CD8-positive, alpha-beta T cell (primary cell): ENCODE measurements at regions of chr17 and their contacts with region 1.

Region 1: DNA sequence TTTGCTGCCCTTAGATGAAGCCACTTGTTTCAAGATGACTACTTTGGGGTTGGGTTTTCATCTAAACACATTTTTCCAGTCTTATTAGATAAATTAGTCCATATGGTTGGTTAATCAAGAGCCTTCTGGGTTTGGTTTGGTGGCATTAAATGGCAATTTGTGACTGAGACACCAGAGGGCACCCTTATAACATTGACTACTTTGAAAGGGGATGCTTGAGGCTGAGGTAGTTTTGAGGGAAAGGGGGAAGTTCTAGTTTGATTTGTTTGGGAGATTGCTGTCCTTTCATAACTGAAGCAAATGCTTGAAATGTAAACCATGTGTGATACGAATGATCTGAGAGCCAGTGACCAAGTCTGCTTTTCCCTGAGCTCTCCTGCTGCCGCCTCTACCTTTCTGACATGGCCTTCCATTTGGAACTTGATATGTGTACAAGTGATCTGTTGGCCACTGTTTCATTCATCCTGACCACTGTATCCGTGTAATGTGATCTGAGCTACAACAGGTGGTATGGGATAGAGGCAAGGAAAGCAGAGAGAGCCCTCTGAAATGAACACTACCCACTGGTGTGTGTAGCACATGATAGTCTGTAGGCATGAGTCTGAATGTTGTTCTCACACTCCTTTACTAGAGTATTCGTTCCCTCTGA is 5.8 kb upstream of the RARA start:
- DNase-seq: peak in 5 of 9 experiments; percentile 41 to 83 (median 66)
- ATAC-seq: peak; percentile 69
- H3K4me3 ChIP-seq: no peak overlapping the region
- H3K4me3 Mint-ChIP-seq: no peak overlapping the region
- H3K27ac ChIP-seq: no peak overlapping the region
- H3K27ac Mint-ChIP-seq: no peak overlapping the region
- H3K4me1 ChIP-seq: peaks cover 35% of the 10 kb centered on the region
- H3K4me1 Mint-ChIP-seq: peaks cover 12% of the 10 kb centered on the region
- H3K27me3 ChIP-seq: no peaks in the 10 kb centered on the region
- H3K27me3 Mint-ChIP-seq: no peaks in the 10 kb centered on the region
- CTCF ChIP-seq: peak; percentile 85

Region 2: GRCh38 chr17:40130352-40131042 is 172.6 kb before region 1 on chr17:
- CTCF ChIA-PET with region 1: no interaction called
- POLR2A ChIA-PET with region 1: no interaction called
- intact Hi-C with region 1: no loop called
- DNase-seq: no peak
- ATAC-seq: no peak
- H3K4me3 ChIP-seq: no peak overlapping the region
- H3K4me3 Mint-ChIP-seq: no peak overlapping the region
- H3K27ac ChIP-seq: no peak overlapping the region
- H3K27ac Mint-ChIP-seq: peak overlapping the region; percentile 14
- H3K4me1 ChIP-seq: no peaks in the 10 kb centered on the region
- H3K4me1 Mint-ChIP-seq: peaks cover 19% of the 10 kb centered on the region
- H3K27me3 ChIP-seq: no peaks in the 10 kb centered on the region
- H3K27me3 Mint-ChIP-seq: no peaks in the 10 kb centered on the region
- CTCF ChIP-seq: no peak

Region 3: GRCh38 chr17:40326014-40326831 is 23.1 kb after region 1 on chr17:
- CTCF ChIA-PET with region 1: interaction called, 32 read pairs
- POLR2A ChIA-PET with region 1: interaction called, 51 read pairs
- intact Hi-C with region 1: loop called in 1 of 2 experiments (anchors 2 kb)
- DNase-seq: peak in 7 of 9 experiments; percentile 39 to 92 (median 71)
- ATAC-seq: peak; percentile 9
- H3K4me3 ChIP-seq: peak overlapping the region; percentile 36 to 51
- H3K4me3 Mint-ChIP-seq: peak overlapping the region; percentile 80
- H3K27ac ChIP-seq: peak overlapping the region; percentile 80 to 97
- H3K27ac Mint-ChIP-seq: peak overlapping the region; percentile 99
- H3K4me1 ChIP-seq: peaks cover 92% of the 10 kb centered on the region
- H3K4me1 Mint-ChIP-seq: peaks cover 90% of the 10 kb centered on the region
- H3K27me3 ChIP-seq: no peaks in the 10 kb centered on the region
- H3K27me3 Mint-ChIP-seq: no peaks in the 10 kb centered on the region
- CTCF ChIP-seq: no peak

Region 4: DNA sequence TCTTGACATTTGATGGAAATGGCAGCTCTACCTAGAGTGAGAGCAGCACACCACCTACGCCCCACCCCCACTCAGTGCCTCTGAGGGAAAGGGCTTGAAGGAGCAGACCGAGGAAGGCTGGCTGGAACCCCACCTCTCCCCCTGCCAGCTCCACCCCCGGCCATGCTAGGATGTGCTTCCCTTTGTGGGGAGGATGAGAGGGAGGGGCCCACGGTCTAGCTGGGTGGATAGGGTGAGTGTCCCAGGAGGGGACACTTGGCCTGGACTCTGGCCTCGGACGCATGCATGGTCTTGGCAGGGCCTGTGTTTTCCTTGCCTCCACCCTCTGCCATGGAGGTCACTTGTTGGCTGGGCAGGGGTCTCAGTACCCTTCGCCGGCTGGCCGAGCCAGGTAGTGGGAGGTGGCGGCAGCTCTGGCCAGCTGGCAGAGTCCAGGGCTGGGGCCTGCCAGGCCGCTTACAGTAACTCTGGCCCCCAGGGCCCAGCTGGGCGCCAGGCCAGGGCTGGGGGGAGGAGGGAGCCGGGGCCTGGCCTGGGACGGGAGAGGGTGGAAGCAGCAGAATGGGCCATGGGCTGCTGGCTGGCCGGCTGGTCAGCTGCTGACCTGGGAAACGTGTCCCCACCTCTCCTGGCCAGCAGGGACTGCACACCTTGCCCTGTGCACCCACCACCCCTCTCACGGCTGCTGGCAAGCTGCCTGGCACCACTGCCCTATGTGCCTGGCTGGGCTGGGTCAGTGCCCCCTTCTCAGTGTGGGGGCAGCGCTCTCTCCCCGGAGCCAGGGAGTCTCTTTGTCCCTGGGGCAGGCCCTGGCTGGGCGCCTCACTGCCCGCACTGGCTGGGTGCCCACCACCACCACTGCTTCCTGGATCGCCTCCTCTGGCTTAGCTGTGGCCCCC is 28.9 kb after region 1 on chr17:
- CTCF ChIA-PET with region 1: interaction called, 25 read pairs
- POLR2A ChIA-PET with region 1: no interaction called
- intact Hi-C with region 1: no loop called
- DNase-seq: peak in 1 of 9 experiments; percentile 20
- ATAC-seq: no peak
- H3K4me3 ChIP-seq: no peak overlapping the region
- H3K4me3 Mint-ChIP-seq: peak overlapping the region; percentile 15
- H3K27ac ChIP-seq: no peak overlapping the region
- H3K27ac Mint-ChIP-seq: peak overlapping the region; percentile 67
- H3K4me1 ChIP-seq: peaks cover 82% of the 10 kb centered on the region
- H3K4me1 Mint-ChIP-seq: peaks cover 75% of the 10 kb centered on the region
- H3K27me3 ChIP-seq: no peaks in the 10 kb centered on the region
- H3K27me3 Mint-ChIP-seq: no peaks in the 10 kb centered on the region
- CTCF ChIP-seq: no peak

Region 5: DNA sequence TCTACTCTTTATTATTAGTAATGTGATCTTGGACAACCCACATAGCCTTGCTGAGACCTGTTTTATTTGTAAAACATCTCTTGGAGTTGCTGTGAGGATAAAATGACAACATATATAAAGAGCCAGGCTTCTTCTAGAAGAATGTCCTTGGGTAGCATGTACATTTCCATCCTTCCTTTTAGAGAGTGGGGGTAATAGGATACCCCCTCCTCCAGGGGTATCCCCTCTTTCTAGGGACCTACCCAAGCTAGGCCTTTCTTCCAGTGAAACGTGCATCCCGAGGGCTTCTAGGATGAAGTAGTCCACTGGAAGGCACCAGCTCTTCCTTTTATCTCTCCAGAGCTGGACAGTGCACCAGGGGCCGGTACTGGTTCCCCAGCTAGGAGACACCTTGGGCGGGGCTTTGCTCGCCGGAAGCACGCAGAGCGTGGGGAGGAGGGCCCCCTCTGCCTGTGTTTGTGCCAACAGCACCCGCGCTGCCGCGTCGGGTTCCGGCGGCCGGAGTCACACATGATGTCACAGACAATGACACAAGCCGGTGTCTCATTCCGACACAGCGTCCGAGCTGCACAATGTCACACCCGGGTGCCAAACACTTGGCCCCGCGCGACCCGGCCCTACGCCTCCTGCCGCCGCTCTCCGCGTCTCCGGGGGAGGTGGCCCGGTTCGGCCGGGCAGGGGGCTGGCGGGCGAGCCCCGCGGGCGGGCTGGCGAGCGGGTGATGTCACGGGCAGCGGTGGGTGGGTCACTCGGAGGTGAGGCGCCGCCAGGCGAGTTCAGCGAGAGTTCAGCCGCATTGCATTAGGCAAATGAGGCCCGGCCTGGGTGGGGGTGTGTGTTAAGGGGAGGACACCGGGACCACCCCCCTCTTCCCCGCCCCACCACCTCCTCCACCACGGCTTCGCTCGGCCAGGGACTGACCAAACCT is 38.0 kb after region 1 on chr17:
- CTCF ChIA-PET with region 1: interaction called, 1,103 read pairs
- POLR2A ChIA-PET with region 1: interaction called, 6 read pairs
- intact Hi-C with region 1: loop called in 1 of 2 experiments (anchors 1 kb)
- DNase-seq: peak; percentile 76 to 96 (median 88)
- ATAC-seq: peak; percentile 75
- H3K4me3 ChIP-seq: peak overlapping the region; percentile 64 to 74
- H3K4me3 Mint-ChIP-seq: peak overlapping the region; percentile 83
- H3K27ac ChIP-seq: peak overlapping the region; percentile 87 to 91
- H3K27ac Mint-ChIP-seq: peak overlapping the region; percentile 96
- H3K4me1 ChIP-seq: peaks cover 78% of the 10 kb centered on the region
- H3K4me1 Mint-ChIP-seq: peaks cover 75% of the 10 kb centered on the region
- H3K27me3 ChIP-seq: no peaks in the 10 kb centered on the region
- H3K27me3 Mint-ChIP-seq: no peaks in the 10 kb centered on the region
- CTCF ChIP-seq: peak; percentile 24

Region 6: DNA sequence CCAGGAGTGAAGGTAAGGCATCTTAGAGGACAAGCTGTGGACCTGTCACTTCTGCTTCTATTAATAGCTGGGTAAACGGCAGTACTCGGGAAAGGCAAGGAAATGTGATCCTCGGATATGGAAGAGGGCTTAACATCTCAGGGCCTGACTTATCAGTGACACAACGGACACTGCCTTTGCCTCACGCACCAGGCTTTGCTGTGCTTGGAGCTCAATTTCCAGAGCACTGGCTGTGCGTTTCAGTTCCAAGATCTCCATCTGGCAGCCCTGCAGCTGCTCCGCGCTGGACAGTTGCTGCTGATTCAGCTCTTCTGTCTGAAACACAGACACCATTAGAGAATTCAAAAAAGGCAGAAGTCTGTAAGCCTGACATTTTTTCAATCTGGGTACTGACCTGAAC is 677.5 kb after region 1 on chr17:
- CTCF ChIA-PET with region 1: no interaction called
- POLR2A ChIA-PET with region 1: no interaction called
- intact Hi-C with region 1: no loop called
- DNase-seq: no peak
- ATAC-seq: no peak
- H3K4me3 ChIP-seq: no peak overlapping the region
- H3K4me3 Mint-ChIP-seq: no peak overlapping the region
- H3K27ac ChIP-seq: no peak overlapping the region
- H3K27ac Mint-ChIP-seq: no peak overlapping the region
- H3K4me1 ChIP-seq: no peaks in the 10 kb centered on the region
- H3K4me1 Mint-ChIP-seq: no peaks in the 10 kb centered on the region
- H3K27me3 ChIP-seq: no peaks in the 10 kb centered on the region
- H3K27me3 Mint-ChIP-seq: peaks cover 23% of the 10 kb centered on the region
- CTCF ChIP-seq: no peak